Activated CD4-positive, alpha-beta memory T cell treated with anti-CD3 and anti-CD28 coated beads, Interleukin-2, amount 10 ng/mL, durations not matched to agents 7 days and 5 days (primary cell): ENCODE measurements at regions of chr5 and their contacts with region 1.

Region 1: DNA sequence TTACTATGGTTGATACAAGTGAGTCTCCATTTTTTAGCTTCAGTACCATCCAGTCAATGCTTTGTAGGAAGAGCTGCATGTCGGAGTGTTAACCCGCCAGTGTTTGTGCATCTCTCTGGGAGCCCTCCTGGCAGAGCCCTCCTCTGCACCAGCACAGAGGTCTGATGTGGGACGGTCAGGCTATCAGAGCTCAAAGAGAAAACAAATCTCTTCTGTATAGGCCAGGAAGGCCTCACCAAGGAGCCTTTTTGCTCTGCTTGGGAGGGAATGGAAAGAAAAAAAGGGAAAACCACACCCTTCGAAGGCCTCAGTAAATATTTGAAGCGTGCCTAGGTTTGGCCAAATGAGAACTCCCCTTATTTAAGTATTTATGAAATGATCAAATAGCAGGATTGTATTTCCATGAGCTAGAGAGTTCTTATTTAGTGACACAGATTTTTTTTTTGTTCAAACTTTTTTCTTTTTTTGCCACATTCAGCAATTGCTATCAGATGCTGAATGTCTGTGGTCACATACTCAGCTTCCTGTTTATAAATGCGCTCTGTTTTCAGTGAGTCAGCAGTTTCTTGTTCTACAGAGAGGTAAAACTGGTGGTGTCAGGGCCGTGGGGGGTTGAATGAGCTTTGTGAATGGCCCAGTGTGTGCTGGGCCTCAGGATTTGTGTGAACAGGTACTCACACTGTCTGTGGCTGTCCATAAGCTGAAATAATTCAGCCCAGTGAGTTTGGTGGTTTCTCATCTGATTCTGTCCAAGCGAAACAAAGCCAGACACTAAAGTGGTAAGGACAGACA is 226.6 kb downstream of the SNX18 start:
- DNase-seq: peak; percentile 71
- H3K4me3 Mint-ChIP-seq: peak overlapping the region; percentile 35
- H3K27ac Mint-ChIP-seq: peak overlapping the region; percentile 89
- H3K4me1 Mint-ChIP-seq: peaks cover 56% of the 10 kb centered on the region
- H3K27me3 Mint-ChIP-seq: peaks cover 3% of the 10 kb centered on the region

Region 2: GRCh38 chr5:54610197-54610944 is 133.8 kb before region 1 on chr5:
- CTCF ChIA-PET with region 1: interaction called, 16 read pairs
- POLR2A ChIA-PET with region 1: interaction called, 17 read pairs
- DNase-seq: peak; percentile 68
- H3K4me3 Mint-ChIP-seq: peak overlapping the region; percentile 53
- H3K27ac Mint-ChIP-seq: peak overlapping the region; percentile 99
- H3K4me1 Mint-ChIP-seq: peaks cover 31% of the 10 kb centered on the region
- H3K27me3 Mint-ChIP-seq: no peaks in the 10 kb centered on the region

Region 3: GRCh38 chr5:54663866-54664265 is 80.3 kb before region 1 on chr5:
- CTCF ChIA-PET with region 1: no interaction called
- POLR2A ChIA-PET with region 1: no interaction called
- DNase-seq: no peak
- H3K4me3 Mint-ChIP-seq: no peak overlapping the region
- H3K27ac Mint-ChIP-seq: no peak overlapping the region
- H3K4me1 Mint-ChIP-seq: peaks cover 6% of the 10 kb centered on the region
- H3K27me3 Mint-ChIP-seq: peaks cover 7% of the 10 kb centered on the region

Region 4: DNA sequence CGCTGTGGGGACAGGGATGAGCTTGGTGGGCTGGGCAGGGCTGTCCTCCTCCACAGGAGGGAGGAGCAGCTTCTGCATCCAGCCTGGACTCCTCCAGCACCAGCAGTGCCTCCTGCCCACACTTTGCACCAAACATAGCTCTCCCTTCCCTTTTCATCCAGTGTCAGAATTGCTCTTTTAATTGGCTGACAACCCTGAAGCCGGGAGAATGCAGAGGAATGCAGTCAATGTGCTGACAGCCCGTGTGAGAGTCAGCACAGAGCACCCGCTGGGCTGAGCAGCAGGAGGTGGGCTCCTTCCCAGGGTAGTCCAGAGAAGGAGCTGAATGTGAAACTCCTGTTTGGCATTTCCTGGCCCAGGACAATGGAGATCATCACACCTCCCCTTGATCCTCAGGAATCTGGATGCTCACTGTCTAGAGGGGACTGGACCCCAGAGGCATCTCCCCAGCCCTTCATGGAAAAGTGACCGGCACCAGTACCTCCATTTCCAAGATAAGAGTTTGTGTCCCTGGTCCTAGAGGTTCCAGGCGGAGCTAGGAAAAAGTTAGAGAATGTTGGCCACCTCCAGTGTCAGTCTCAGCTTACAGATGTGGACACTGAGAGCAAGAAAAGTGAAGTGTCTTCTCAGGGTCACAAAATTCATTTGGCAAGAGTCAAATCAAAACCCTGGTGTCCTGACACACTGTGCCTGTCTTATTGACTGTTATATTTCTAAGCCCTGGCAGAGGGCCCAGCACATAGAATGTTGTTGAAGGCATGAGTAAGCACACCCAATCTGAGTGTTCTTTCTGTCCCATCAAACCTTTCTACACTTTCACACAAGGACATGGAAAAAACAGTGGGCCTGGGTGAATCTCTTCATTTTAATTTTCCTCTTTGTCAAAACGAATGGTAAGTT is 24.6 kb before region 1 on chr5:
- CTCF ChIA-PET with region 1: interaction called, 5 read pairs
- POLR2A ChIA-PET with region 1: interaction called, 18 read pairs
- DNase-seq: no peak
- H3K4me3 Mint-ChIP-seq: no peak overlapping the region
- H3K27ac Mint-ChIP-seq: peak overlapping the region; percentile 26
- H3K4me1 Mint-ChIP-seq: peaks cover 44% of the 10 kb centered on the region
- H3K27me3 Mint-ChIP-seq: no peaks in the 10 kb centered on the region

Region 5: DNA sequence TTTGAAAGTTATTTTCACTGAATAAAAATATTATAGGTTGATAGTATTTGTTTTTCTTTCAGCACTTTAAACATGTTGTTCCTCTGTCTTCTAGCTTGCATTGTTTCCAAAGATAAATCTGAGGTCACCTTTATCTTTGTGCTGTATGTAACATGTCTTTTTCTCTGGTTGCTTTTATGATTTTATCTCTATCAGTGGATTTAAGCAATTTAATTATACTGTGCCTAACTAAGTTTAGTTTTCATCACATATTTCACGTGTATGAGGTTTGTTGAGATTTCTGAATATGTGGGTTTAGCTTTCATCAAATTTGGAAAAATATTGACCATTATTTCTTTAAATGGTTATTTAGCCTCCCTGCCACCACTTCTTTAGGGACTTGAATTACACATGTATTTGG is 12.1 kb before region 1 on chr5:
- CTCF ChIA-PET with region 1: interaction called, 10 read pairs
- POLR2A ChIA-PET with region 1: interaction called, 9 read pairs
- DNase-seq: no peak
- H3K4me3 Mint-ChIP-seq: no peak overlapping the region
- H3K27ac Mint-ChIP-seq: no peak overlapping the region
- H3K4me1 Mint-ChIP-seq: peaks cover 2% of the 10 kb centered on the region
- H3K27me3 Mint-ChIP-seq: peaks cover 6% of the 10 kb centered on the region

Region 6: DNA sequence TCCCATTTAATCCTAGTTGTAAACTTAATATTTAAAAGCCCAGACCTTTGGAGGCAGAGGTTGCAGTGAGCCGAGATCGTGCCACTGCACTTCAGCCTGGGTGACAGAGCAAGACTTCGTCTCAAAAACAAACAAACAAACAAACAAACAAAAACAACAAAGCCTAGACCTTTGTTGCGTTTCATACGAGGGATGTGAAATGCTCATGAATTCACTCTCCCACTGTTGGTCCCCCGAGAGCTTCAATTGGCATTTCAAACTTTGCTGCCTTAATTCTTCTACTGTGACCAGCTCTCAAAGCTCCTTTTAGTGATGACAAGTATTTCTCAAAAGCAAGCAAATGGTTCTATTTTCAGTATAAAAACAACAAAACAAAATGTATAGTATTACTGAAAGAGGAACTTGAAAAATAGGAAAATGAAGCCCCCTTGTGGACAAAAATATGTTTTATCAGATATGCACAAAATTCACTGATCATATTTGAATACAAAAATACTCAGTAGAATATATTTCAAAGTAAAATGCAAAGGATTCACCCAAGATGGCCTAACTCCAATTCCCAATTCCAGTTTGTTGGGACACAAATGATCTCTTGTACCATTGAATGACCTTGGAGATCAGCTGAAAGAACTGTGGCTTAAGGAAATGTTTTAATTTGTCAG is 100.8 kb after region 1 on chr5:
- CTCF ChIA-PET with region 1: interaction called, 18 read pairs
- POLR2A ChIA-PET with region 1: interaction called, 4 read pairs
- DNase-seq: no peak
- H3K4me3 Mint-ChIP-seq: no peak overlapping the region
- H3K27ac Mint-ChIP-seq: no peak overlapping the region
- H3K4me1 Mint-ChIP-seq: peaks cover 12% of the 10 kb centered on the region
- H3K27me3 Mint-ChIP-seq: peaks cover 18% of the 10 kb centered on the region

Region 7: GRCh38 chr5:54883374-54884212 is 139.4 kb after region 1 on chr5:
- CTCF ChIA-PET with region 1: no interaction called
- POLR2A ChIA-PET with region 1: no interaction called
- DNase-seq: no peak
- H3K4me3 Mint-ChIP-seq: peak overlapping the region; percentile 20
- H3K27ac Mint-ChIP-seq: no peak overlapping the region
- H3K4me1 Mint-ChIP-seq: peaks cover 25% of the 10 kb centered on the region
- H3K27me3 Mint-ChIP-seq: peaks cover 78% of the 10 kb centered on the region